IMR-90 (cell line): ENCODE measurements at regions of chr16 and their contacts with region 1.

Region 1: DNA sequence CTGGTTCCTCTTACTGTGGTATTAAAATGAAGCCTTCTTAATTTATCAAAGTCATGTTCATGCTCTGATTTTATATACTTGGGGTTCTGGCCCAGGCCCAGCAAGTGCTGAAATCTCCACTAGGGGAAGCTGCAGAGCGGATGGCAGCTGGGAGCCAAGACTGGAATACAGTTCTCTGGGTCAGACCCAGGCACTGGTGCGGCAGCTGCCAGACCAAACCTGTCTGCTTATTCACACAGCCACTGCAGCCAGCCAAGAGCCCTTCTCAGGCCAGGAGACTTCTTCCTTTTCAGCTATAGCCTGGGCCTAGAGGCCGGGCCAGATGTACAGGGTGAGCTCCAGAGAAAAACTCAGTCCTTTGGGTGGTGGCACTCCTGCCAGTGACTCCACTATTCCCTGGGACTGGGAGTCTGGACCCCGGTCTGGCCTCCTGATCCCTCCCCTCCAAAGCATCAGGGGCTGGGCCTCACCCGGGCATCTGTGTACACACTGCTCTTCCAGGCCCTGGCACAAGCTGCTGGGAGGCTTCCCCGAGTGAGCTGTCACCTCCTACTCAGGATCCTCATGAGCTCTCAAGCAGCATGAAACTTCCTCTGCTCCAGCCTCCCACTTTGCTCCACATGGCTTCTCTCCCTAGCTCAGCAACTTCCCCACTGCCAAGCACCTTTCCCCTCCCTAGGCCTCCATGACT is 24.4 kb downstream of the ATP6V0D1 start:
- DNase-seq: peak; percentile 36
- ATAC-seq: peak; percentile 36
- H3K4me3 ChIP-seq: no peak overlapping the region
- H3K27ac ChIP-seq: no peak overlapping the region
- H3K4me1 ChIP-seq: peaks cover 27% of the 10 kb centered on the region
- H3K27me3 ChIP-seq: no peaks in the 10 kb centered on the region
- CTCF ChIP-seq: peak; percentile 50
- POLR2A ChIP-seq: no peak
- RAD21 ChIP-seq: peak; percentile 9; the same call in 1 of the 2 replicates

Region 2: GRCh38 chr16:66961065-66961744 is 495.3 kb before region 1 on chr16 and contains the start of gene CES3:
- CTCF ChIA-PET with region 1: no interaction called
- POLR2A ChIA-PET with region 1: no interaction called
- dilution Hi-C with region 1: no loop called
- in situ Hi-C with region 1: loop called (anchors 10 kb)
- intact Hi-C with region 1: no loop called
- DNase-seq: peak; percentile 58
- ATAC-seq: peak; percentile 99
- H3K4me3 ChIP-seq: no peak within 1 kb of the TSS
- H3K27ac ChIP-seq: no peak within 1 kb of the TSS
- H3K4me1 ChIP-seq: no peaks in the 10 kb centered on the region
- H3K27me3 ChIP-seq: peaks cover 36% of the 10 kb centered on the region
- CTCF ChIP-seq: peak; percentile 71
- POLR2A ChIP-seq: no peak
- RAD21 ChIP-seq: peak; percentile 37
- total RNA-seq, gene CES3: under 0.01 TPM in 1 of 2 replicates, not detected in the other